ENCODE measurements at regions of chr17 and their contacts with region 1.

Region 1: DNA sequence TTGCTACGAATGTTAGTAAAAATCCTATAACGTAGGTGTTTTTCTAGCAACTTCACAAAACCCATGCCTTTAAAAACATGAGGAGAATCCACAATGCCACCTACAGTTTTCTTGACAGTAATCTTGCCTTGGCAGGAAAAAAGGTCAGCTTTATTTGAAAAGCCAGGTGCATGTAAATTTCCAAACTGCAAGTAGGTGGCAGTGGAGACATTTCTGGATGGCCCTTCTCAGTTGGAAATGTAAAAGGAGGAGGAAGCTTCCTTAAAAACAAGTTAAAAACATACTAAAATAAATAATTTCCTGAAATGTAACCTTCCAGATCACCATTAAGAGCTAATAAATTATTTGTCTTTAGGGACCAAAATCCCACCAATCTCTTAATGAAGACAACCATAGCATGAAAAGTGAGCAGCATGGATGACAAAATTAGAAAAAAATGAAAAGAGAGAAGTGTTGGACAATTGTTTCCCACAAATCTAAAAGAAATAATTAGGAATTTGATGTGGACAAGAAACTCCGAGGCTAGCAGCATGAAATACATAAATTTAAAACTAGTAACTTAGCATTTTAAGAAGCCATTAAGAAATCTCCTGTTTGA is 152.2 kb downstream of the SNX11 start:
- DNase-seq: no peak
- ATAC-seq: peak; percentile 59
- H3K4me3 ChIP-seq: no peak overlapping the region
- H3K27ac ChIP-seq: no peak overlapping the region
- H3K4me1 ChIP-seq: peaks cover 12 to 55% of the 10 kb centered on the region in 2 experiments
- H3K27me3 ChIP-seq: no peaks in the 10 kb centered on the region
- CTCF ChIP-seq: peak; percentile 84 to 98 (median 91)
- POLR2A ChIP-seq: no peak
- RAD21 ChIP-seq: peak; percentile 94

Region 2: DNA sequence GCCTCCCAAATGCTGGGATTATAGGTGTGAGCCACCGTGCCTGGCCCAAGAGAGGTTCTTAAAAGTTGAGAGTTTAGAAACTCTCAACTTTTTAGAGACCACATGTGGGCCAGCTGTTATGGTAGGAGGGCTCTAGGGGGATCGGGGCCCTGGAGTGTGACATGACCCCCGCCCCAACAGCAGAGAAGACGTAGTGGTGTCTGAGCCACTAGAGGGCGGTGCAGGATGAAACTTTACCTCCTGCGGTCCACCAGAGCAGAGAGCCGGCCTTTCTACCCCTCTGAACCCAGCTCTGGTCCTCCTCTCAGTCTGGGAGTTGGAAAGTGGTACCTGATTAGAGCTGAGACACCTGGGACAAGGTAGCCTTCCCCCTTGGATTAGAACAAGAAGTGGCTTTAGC is 281.5 kb before region 1 on chr17:
- CTCF ChIA-PET with region 1: no interaction called
- POLR2A ChIA-PET with region 1: no interaction called
- RAD21 ChIA-PET with region 1: no interaction called
- intact Hi-C with region 1: no loop called
- DNase-seq: no peak
- ATAC-seq: peak; percentile 88
- H3K4me3 ChIP-seq: no peak overlapping the region
- H3K27ac ChIP-seq: no peak overlapping the region
- H3K4me1 ChIP-seq: no peaks in the 10 kb centered on the region
- H3K27me3 ChIP-seq: no peaks in the 10 kb centered on the region
- CTCF ChIP-seq: peak; percentile 73 to 88 (median 84)
- POLR2A ChIP-seq: no peak
- RAD21 ChIP-seq: peak; percentile 74

Region 3: DNA sequence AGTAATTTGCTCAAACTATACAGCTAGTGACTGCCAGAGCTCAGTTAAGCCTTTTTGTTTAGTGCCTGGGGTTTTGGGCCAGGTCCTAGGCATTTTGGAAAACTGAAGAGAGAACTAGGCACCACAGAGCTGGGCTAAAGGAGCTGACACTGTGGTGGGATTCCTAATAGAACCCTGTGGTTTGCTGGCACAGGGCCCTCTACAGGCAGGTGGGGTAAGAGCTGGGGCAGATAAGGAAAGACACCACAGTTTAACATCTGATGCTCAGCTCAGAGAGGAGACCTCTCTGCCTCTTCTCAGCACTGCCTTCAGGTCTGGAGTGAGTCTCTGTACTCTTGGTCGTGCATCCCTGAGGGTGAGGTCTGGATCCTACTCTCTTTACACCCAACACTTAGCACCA is 31.1 kb before region 1 on chr17:
- CTCF ChIA-PET with region 1: interaction called, 336 read pairs
- POLR2A ChIA-PET with region 1: no interaction called
- RAD21 ChIA-PET with region 1: interaction called in 1 of 2 experiments, 3 read pairs
- intact Hi-C with region 1: no loop called
- DNase-seq: no peak
- ATAC-seq: peak; percentile 92
- H3K4me3 ChIP-seq: no peak overlapping the region
- H3K27ac ChIP-seq: no peak overlapping the region
- H3K4me1 ChIP-seq: peaks cover 0 to 26% of the 10 kb centered on the region in 2 experiments; a peak in 1 of 4 replicates
- H3K27me3 ChIP-seq: no peaks in the 10 kb centered on the region
- CTCF ChIP-seq: peak in 2 of 3 experiments; percentile 63 to 73; a peak in 4 of 6 replicates
- POLR2A ChIP-seq: no peak
- RAD21 ChIP-seq: 0 out of 2 replicates have a peak, but pooled peaks have one; percentile 7

Region 4: DNA sequence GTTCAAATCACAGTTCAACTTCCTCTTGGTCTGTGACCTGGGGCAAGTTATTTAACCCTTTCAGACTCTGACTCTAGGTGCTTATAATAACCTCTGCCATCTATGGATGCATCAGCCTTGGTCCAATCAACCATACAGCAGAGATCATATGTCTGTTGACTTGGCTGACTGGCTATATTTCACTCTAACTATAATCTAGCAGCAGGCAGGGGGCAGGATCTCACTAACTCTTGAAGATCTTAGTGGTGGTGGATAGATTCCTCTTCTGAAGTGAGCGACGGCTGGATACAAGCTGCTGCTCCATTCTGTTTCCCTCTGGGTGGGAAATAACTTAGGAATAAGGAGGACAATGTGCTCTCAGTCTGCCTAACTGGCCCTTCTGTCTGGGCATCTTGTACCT is 23.6 kb after region 1 on chr17:
- CTCF ChIA-PET with region 1: interaction called, 152 read pairs
- POLR2A ChIA-PET with region 1: interaction called, 6 read pairs
- RAD21 ChIA-PET with region 1: no interaction called
- intact Hi-C with region 1: no loop called
- DNase-seq: no peak
- ATAC-seq: peak; percentile 61
- H3K4me3 ChIP-seq: no peak overlapping the region
- H3K27ac ChIP-seq: no peak overlapping the region
- H3K4me1 ChIP-seq: peaks cover 0 to 10% of the 10 kb centered on the region in 2 experiments; a peak in 2 of 4 replicates
- H3K27me3 ChIP-seq: no peaks in the 10 kb centered on the region
- CTCF ChIP-seq: no peak
- POLR2A ChIP-seq: no peak
- RAD21 ChIP-seq: no peak

Region 5: DNA sequence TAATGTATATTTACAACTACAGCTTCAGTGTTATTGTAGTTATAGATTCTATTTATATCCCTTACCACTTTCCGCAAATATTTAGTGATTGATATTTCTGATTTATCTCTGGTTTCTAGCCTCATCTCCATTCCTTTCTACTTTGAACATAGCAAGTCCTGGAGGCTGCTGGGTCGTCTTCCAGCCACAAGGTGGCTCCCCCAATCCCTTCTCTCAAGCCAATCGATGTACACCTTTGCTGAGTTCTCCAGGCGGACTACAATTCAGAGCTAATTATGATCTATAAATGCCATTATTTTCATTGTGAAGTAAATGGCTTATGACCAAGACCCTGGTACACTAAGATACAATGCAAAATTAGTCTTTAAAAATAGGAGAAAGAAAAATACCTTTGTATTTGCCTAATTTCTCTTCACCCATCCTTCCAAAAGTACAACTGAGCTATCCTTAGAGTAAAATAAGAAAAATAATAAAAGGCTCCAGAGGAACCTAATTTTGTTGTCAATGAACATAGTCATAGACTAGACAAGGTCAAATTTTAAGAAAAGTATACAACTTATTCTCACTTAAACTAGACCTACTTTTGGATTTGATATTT is 48.1 kb after region 1 on chr17:
- CTCF ChIA-PET with region 1: interaction called, 33 read pairs
- POLR2A ChIA-PET with region 1: no interaction called
- RAD21 ChIA-PET with region 1: no interaction called
- intact Hi-C with region 1: no loop called
- DNase-seq: peak; percentile 78
- ATAC-seq: peak; percentile 100
- H3K4me3 ChIP-seq: no peak overlapping the region
- H3K27ac ChIP-seq: no peak overlapping the region
- H3K4me1 ChIP-seq: no peaks in the 10 kb centered on the region
- H3K27me3 ChIP-seq: no peaks in the 10 kb centered on the region
- CTCF ChIP-seq: peak; percentile 81 to 99 (median 98)
- POLR2A ChIP-seq: no peak
- RAD21 ChIP-seq: peak; percentile 75

Region 6: GRCh38 chr17:48374650-48375230 is 114.9 kb after region 1 on chr17:
- CTCF ChIA-PET with region 1: interaction called, 25 read pairs
- POLR2A ChIA-PET with region 1: no interaction called
- RAD21 ChIA-PET with region 1: no interaction called
- intact Hi-C with region 1: loop called (anchors 1 kb)
- DNase-seq: peak; percentile 63
- ATAC-seq: peak; percentile 99
- H3K4me3 ChIP-seq: no peak overlapping the region
- H3K27ac ChIP-seq: no peak overlapping the region
- H3K4me1 ChIP-seq: no peaks in the 10 kb centered on the region
- H3K27me3 ChIP-seq: no peaks in the 10 kb centered on the region
- CTCF ChIP-seq: peak; percentile 92 to 97 (median 94)
- POLR2A ChIP-seq: no peak
- RAD21 ChIP-seq: peak; percentile 91

Region 7: GRCh38 chr17:48618256-48618897 is 358.6 kb after region 1 on chr17:
- CTCF ChIA-PET with region 1: interaction called, 14 read pairs
- POLR2A ChIA-PET with region 1: interaction called, 6 read pairs
- RAD21 ChIA-PET with region 1: interaction called in 1 of 2 experiments, 4 read pairs
- intact Hi-C with region 1: loop called (anchors 1 kb)
- DNase-seq: peak; percentile 74
- ATAC-seq: peak; percentile 71
- H3K4me3 ChIP-seq: peak overlapping the region; percentile 80 to 90
- H3K27ac ChIP-seq: peak overlapping the region; percentile 88
- H3K4me1 ChIP-seq: peaks cover 8 to 37% of the 10 kb centered on the region in 2 experiments; a peak in 3 of 4 replicates
- H3K27me3 ChIP-seq: no peaks in the 10 kb centered on the region
- CTCF ChIP-seq: peak; percentile 97 to 100 (median 98); a peak in 5 of 6 replicates
- POLR2A ChIP-seq: no peak
- RAD21 ChIP-seq: peak; percentile 99

Measured in HCT116 (cell line).